PC-9 (cell line): ENCODE measurements at regions of chr16 and their contacts with region 1.

Region 1: DNA sequence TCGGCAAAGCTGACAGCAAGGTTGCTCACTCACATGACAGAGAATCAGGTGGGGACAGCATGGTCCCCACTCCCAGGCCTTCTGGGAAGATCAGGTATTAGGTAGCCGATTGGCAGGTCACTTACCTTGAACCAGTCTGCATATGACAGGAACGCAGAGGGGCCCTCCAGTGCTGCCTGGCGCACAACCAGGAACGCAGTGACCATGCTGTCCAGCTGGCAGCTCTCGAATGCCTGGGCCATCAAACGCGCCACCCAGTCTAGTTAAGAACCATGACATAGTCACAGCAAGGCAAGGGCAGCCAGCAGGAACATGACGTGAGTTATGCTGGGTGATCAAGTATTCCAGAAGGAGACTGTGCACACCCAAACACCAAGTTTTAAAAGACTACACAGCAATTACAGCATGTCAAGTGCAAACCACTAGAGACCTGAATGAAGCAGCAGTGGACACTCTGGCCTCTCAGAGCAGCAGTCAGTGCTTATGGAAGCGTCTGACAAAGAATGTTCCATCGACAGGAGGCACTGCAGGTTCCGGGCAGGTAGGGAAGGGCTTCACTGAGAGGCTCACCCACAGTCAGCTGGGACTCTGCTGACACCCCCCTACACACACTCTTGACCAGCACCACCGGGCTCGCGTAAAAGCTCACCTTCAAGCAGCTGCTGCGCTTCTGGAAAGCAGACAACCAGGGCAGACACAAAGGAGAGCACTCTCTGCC is 25.0 kb downstream of the FANCA start:
- DNase-seq: no peak
- H3K4me3 ChIP-seq: no peak overlapping the region
- H3K27ac ChIP-seq: no peak overlapping the region
- H3K4me1 ChIP-seq: no peaks in the 10 kb centered on the region
- H3K27me3 ChIP-seq: no peaks in the 10 kb centered on the region
- CTCF ChIP-seq: no peak

Region 2: DNA sequence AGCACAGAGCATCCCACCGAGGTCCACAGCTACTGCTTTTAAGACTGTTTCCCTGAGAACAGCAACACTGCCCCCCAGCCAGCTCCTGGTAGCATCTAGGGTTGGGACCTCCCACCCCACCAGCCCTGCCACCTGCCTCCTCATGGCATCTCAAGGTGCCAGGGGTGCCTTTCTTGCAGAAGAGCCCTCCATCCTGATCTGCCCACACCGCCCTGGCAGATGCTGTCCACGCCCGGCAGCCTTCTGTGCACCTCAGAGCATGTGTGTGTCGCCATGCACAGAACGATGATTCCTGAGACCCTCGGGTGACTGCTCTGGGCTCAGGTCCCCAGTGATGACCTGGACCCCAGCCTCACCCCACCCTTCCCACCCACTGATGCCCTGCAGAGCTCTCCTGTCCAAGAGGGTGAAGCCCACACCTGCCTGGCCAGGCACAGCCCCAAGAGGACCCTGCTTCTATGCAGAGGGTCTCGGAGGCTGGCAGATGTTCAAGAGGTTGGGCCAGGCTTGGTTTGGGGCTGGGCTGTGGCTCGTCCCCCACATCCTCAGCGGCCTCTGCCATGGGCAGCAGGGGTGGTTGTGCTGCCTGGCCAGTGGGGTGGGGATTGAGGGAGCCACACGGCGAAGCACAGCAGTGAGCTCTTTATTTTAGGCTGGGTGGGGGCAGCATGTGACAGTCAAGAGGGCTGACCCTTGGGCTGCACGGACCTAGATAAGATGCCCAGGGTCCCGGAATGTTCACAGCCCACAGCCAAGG is 84.8 kb before region 1 on chr16:
- CTCF ChIA-PET with region 1: interaction called, 3 read pairs
- POLR2A ChIA-PET with region 1: no interaction called
- intact Hi-C with region 1: loop called (anchors 1 kb)
- DNase-seq: no peak
- H3K4me3 ChIP-seq: no peak overlapping the region
- H3K27ac ChIP-seq: no peak overlapping the region
- H3K4me1 ChIP-seq: no peaks in the 10 kb centered on the region; the same call in 1 of the 2 replicates
- H3K27me3 ChIP-seq: no peaks in the 10 kb centered on the region
- CTCF ChIP-seq: no peak

Region 3: DNA sequence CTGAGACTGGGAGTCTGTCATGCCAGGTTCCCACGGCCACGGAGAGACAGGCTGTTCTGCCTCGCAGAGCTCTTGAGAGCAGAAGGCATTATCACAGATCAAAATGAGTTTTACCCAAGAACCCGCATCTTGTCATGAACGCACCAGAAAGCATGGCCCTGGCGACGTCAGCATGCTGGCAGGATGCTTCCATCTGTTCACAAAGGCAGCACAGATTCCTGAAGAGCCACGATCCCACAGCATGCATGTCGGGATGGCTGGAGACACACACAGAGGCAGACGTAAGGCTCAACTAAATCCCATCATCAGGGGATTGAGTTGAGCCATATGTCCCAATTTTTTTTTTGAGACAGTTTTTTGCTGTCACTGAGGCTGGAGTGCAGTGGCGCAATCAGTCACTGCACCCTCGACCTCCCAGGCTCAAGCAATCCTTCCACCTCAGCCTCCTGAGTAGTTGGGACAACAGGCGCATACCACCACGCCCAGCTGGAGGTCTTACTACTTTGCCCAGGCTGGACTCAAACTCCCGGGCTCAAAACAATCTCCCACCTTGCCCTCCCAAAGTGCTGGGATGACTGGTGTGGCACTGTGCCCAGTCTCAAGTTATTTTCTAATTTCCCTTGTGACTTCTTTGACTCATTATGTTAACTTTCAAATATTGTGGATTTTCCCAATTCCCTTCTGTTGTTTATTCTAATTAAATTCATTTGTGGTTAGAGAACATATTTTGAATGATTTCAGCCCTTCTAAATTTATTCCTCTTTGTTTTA is 13.9 kb after region 1 on chr16:
- CTCF ChIA-PET with region 1: interaction called, 5 read pairs
- POLR2A ChIA-PET with region 1: interaction called, 21 read pairs
- intact Hi-C with region 1: no loop called
- DNase-seq: no peak
- H3K4me3 ChIP-seq: no peak overlapping the region
- H3K27ac ChIP-seq: no peak overlapping the region
- H3K4me1 ChIP-seq: no peaks in the 10 kb centered on the region
- H3K27me3 ChIP-seq: no peaks in the 10 kb centered on the region
- CTCF ChIP-seq: no peak

Region 4: GRCh38 chr16:89931305-89931896 is 140.0 kb after region 1 on chr16:
- CTCF ChIA-PET with region 1: no interaction called
- POLR2A ChIA-PET with region 1: no interaction called
- intact Hi-C with region 1: no loop called
- DNase-seq: no peak
- H3K4me3 ChIP-seq: no peak overlapping the region
- H3K27ac ChIP-seq: no peak overlapping the region
- H3K4me1 ChIP-seq: no peaks in the 10 kb centered on the region
- H3K27me3 ChIP-seq: no peaks in the 10 kb centered on the region
- CTCF ChIP-seq: no peak

Region 5: GRCh38 chr16:89999831-90000574 is 208.6 kb after region 1 on chr16:
- CTCF ChIA-PET with region 1: no interaction called
- POLR2A ChIA-PET with region 1: no interaction called
- intact Hi-C with region 1: no loop called
- DNase-seq: no peak
- H3K4me3 ChIP-seq: no peak overlapping the region
- H3K27ac ChIP-seq: no peak overlapping the region
- H3K4me1 ChIP-seq: no peaks in the 10 kb centered on the region
- H3K27me3 ChIP-seq: no peaks in the 10 kb centered on the region
- CTCF ChIP-seq: no peak